Head of caudate nucleus (tissue), 42 donors: ENCODE measurements at regions of chr15 and their contacts with region 1.

Region 1: DNA sequence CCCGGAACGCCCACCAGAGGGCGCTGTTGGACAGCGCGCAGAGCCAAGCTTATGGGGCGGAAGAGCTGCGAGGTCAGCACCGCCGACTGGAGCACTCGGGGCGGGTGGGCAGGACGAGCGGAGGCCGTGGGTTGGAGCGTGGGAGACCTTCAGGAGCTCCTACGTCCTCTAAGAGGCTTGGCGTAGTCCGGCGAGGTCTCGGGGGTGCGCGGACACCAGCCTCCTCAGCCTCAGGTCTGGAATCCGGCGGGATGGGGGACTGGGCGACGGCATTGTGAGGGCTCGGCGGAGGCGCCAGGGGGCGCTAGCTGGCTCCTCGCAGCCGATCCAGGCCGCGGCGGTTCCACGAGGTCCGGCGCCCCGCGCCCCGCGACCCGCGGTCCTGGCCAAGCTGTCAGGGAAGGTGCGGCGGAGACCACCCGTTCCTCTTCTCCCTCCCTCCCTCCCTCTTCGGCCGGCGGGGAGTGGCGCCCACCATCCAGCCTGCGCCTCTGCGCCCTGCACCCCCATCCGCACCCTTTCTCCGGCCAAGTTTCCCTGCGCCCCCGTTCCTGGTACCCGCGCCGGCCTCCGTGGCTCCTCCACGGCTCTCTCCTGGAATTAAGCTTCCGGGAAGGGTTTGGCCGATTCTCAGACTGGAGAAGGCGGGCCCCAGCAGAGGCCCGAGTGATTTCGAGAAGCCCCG is 24.3 kb upstream of the POLG start:
- DNase-seq: peak in 41 of 42 donors; percentile 67 to 92 (median 82)

Region 2: GRCh38 chr15:89416141-89416853 is 57.4 kb after region 1 on chr15:
- intact Hi-C with region 1: loop called (anchors 5 kb)
- DNase-seq: peak in 39 of 42 donors; percentile 24 to 79 (median 55)

Region 3: GRCh38 chr15:89430530-89431341 is 71.8 kb after region 1 on chr15:
- intact Hi-C with region 1: loop called (anchors 2 kb)
- DNase-seq: peak; percentile 76 to 98 (median 92)

Region 4: DNA sequence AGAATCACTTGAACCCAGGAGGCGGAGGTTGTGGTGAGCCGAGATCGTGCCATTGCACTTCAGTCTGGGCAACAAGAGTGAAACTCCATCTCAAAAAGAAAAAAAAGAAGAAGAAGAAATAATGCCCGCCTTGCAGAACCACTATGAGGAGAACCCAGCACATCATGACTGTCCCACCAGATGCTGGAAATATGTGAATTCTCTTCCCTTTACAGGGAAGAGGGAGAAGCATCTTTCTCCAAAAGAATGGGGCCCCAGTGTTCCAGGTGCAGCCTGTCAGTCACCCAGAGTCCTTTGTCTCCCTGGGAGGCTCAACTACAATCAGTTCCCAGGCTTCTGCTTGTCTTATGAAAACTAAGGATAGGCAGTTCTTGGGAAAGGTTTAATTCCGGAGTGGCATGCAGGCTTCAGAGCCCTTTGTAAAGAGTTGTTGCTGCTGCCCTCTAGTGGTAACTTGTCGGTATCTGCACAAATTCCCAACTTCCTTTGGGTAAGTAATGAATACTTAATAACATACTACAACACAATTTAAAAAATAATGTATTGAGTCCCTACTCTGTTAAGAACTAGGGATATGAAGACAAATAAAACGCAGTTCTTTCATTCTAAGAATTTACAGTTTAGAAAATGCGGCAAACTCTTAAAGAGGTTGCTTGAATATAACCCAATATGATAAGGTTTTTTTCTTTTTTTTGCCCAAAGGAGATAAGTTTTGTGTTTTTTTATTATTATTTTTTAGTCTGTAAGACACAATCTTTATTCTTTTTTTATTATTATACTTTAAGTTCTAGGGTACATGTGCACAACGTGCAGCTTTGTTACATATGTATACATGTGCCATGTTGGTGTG is 197.7 kb after region 1 on chr15:
- intact Hi-C with region 1: loop called (anchors 10 kb)
- DNase-seq: peak in 36 of 42 donors; percentile 12 to 83 (median 62)

Region 5: DNA sequence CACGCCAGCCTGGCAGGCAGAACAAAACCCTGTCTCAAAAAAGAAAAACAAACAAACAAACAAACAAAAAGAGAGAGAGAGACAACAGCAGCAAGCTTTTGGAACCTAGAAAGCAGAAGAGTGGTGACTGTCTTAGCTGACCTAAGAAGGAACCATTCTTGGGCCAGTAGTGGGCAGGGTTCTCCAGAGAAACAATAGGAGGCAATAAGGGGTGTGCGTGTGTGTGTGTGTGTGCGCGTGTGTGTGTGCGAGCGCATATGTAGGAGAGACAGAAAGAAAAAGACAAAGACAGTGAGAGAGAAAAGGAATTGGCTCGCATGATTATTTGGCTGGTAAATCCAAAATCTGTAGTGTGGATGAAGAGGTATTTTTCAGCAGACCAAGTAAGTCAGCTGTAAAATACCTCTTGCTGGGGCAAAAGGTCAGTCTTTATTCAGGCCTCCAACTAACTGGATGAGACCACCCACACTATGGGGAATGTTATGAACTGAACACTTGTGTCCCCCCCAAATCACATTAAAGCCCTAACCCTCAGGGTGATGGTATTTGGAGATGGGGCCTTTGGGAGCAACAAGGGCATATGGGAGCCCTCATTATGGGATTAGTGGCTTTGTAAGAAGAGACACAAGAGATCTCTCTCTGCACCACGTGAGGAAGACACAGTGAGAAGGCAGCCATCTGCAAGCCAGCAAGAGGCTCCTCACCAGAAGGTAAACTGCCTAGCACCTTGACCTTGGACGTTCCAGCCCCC is 1343.2 kb after region 1 on chr15:
- intact Hi-C with region 1: no loop called
- DNase-seq: no peak